Common myeloid progenitor, CD34-positive (primary cell): ENCODE measurements at regions of chr11 and their contacts with region 1.

Region 1: GRCh38 chr11:61516675-61517572 is 8.4 kb downstream of the LRRC10B start:
- DNase-seq: peak; percentile 39 to 61 (median 60)
- H3K4me3 ChIP-seq: peak overlapping the region in 4 of 7 experiments; percentile 29 to 71 (median 42)
- H3K27ac ChIP-seq: no peak overlapping the region
- H3K4me1 ChIP-seq: peaks cover 0 to 12% (median 9%) of the 10 kb centered on the region in 4 experiments
- H3K27me3 ChIP-seq: peaks cover 0 to 8% (median 6%) of the 10 kb centered on the region in 5 experiments

Region 2: DNA sequence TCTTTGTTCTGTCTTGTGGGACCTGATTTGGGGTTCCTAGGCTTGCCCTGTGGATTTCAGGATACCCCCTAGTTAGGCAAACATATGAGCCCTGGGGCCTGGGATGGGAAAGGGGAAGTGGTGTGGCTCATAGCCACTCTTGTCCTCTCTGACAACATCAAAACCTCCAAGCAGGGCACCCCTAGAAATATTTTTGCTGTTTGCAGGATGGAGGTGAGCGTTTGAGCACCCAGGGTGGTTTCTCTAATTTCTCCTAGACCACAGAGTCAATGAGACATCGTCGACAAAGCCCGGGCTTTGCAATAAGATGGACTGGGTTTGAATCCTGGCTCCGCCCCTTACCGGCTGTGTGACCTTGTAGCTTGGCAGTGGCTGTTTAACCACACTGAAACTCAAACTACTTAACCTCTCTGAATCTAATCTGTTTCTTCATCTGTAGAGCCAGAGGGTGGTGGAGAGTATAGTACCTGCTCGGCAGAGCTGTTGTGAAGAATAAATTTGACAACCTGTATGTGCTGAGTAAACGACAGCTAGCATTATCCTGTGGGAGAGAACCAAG is 13.6 kb before region 1 on chr11:
- CTCF ChIA-PET with region 1: interaction called, 26 read pairs
- POLR2A ChIA-PET with region 1: no interaction called
- DNase-seq: peak in 1 of 3 donors; percentile 13
- H3K4me3 ChIP-seq: no peak overlapping the region
- H3K27ac ChIP-seq: no peak overlapping the region
- H3K4me1 ChIP-seq: peaks cover 0 to 6% (median 5%) of the 10 kb centered on the region in 4 experiments
- H3K27me3 ChIP-seq: peaks cover 2 to 32% (median 24%) of the 10 kb centered on the region in 5 experiments

Region 3: DNA sequence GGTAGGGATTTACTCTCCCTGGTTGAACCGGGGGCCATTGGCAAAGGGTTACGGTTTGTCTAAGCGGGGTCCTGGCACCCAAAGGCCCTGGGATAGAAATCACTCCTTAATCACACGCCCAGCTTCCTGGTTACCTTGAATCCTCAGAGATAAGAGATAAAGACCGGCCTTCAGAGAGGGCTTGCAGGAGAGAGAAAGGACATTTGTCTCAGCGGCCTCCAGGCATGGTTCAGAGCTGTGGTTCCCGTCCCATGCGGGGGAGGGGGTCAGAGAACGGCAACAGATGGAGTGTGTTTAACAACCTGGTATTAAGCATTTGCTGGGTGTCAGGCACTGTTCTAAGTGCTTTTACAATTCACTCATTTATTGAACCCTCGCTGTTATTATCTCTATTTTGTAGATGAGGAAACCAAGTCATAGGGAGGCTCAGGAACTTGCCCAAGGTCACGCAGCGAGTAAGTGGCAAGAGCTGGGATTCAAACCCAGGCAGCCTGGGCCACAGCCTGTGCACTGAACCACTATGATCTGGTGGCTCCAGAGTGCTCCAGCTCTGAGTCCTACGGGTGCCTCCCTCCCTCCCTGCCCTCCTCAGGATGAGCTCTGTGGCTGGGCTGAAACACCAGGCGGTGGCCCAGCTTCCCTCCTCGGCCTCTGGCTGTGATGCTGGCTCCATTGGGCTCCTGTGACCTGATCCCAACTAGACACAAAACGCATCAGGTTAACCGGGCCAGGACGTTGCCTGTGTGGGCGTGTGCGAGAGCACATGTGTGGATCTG is 10.2 kb after region 1 on chr11:
- CTCF ChIA-PET with region 1: interaction called, 25 read pairs
- POLR2A ChIA-PET with region 1: interaction called, 3 read pairs
- DNase-seq: no peak
- H3K4me3 ChIP-seq: no peak overlapping the region
- H3K27ac ChIP-seq: no peak overlapping the region
- H3K4me1 ChIP-seq: peaks cover 0 to 2% (median 0%) of the 10 kb centered on the region in 4 experiments
- H3K27me3 ChIP-seq: peaks cover 0 to 57% (median 2%) of the 10 kb centered on the region in 5 experiments

Region 4: DNA sequence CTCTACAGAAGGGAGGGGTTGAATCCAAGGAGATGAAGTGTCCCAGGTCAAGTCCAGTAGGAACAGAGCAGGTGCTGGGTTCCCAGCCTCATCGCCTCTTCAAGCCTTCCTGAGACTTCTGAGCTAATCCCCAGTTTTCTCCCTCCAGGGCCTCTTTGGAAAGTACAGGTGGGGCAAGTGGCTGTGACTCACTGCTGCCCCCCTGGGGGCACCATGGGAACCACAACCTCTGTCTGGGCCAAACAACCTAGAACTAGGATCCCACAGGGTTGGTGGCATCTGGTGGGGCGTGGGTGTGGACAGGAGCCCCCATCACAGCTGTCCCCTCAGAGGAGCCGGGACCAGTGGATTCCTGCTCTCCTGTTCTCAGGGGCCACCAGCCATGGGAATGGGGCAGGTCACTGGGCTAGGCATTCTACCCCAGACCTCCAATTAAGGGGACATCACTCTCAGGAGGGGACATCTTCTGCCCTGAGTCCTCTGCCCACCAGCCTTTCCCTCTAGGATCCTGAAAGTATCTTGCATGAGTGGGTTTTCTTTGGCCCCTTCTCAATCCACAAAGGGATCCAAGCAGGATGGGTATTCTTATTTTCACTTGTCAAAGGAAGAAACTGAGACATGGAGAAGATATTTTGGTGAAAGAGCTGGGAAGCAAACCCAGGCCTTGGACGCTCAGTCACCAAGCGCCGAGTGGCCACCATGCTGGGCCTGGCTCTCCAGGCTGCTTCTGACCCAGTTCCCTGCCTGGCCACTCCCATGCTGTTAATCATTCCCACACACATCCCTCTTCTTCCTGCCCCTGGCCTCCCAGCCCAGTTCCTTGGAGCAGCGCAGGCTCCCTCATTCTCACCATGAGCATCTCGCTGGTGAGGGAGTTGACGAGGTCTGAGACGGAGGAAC is 15.5 kb after region 1 on chr11:
- CTCF ChIA-PET with region 1: interaction called, 25 read pairs
- POLR2A ChIA-PET with region 1: no interaction called
- DNase-seq: peak; percentile 29 to 59 (median 41)
- H3K4me3 ChIP-seq: no peak overlapping the region
- H3K27ac ChIP-seq: no peak overlapping the region
- H3K4me1 ChIP-seq: peaks cover 0 to 2% (median 0%) of the 10 kb centered on the region in 4 experiments
- H3K27me3 ChIP-seq: peaks cover 0 to 28% (median 2%) of the 10 kb centered on the region in 5 experiments